CD4-positive, alpha-beta memory T cell (primary cell): ENCODE measurements at regions of chr22 and their contacts with region 1.

Region 1: DNA sequence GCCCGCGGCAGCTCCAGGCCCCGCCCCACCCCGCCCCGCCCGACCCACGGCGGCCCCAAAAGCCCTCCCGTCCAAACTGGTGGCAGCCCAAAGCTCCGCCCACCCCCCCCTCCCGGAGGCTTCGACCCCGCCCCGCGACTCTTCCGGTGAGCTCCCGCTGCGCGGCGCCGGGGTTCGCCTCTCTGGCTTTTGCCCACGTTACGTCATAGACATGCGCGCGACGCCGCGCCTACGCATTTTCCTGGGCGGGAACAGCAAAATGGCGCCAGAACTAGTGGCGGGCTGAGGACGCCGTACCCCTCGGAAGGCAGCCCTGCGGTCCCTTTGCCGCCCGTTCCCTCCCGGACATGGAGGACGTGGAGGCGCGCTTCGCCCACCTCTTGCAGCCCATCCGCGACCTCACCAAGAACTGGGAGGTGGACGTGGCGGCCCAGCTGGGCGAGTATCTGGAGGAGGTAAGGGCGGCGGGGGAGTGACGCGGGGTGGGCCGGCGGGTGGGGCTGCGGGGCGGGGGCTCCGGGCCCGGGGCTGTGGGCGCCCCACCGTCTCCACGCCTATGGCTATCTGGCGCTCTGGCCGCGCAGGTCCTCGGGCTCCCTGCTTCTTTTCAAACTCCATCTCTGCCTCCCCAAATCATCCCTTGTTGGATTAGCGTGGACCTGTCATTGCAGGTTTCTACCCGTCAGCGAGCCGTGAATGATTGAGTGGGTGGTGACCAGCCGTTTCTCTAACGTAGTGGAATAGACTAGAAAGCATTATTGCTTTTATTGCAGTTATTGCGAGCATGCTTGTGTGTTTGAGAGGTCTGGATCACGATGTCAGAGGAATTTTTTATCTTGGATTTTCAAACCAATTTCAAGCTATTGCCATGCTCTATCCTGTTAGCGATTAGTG is at the start of gene NCAPH2:
- DNase-seq: peak; percentile 96 to 97 (median 97)
- H3K4me3 ChIP-seq: peak within 1 kb of the TSS; percentile 84 to 98
- H3K4me3 Mint-ChIP-seq: peak within 1 kb of the TSS; percentile 92 to 98 (median 94)
- H3K27ac ChIP-seq: peak within 1 kb of the TSS; percentile 98
- H3K27ac Mint-ChIP-seq: peak within 1 kb of the TSS; percentile 90 to 99 (median 98)
- H3K4me1 ChIP-seq: peaks cover 28% of the 10 kb centered on the region
- H3K4me1 Mint-ChIP-seq: peaks cover 10 to 26% (median 19%) of the 10 kb centered on the region in 4 donors
- H3K27me3 ChIP-seq: no peaks in the 10 kb centered on the region
- H3K27me3 Mint-ChIP-seq: no peaks in the 10 kb centered on the region
- total RNA-seq, gene NCAPH2: 81.1 to 81.8 TPM

Region 2: DNA sequence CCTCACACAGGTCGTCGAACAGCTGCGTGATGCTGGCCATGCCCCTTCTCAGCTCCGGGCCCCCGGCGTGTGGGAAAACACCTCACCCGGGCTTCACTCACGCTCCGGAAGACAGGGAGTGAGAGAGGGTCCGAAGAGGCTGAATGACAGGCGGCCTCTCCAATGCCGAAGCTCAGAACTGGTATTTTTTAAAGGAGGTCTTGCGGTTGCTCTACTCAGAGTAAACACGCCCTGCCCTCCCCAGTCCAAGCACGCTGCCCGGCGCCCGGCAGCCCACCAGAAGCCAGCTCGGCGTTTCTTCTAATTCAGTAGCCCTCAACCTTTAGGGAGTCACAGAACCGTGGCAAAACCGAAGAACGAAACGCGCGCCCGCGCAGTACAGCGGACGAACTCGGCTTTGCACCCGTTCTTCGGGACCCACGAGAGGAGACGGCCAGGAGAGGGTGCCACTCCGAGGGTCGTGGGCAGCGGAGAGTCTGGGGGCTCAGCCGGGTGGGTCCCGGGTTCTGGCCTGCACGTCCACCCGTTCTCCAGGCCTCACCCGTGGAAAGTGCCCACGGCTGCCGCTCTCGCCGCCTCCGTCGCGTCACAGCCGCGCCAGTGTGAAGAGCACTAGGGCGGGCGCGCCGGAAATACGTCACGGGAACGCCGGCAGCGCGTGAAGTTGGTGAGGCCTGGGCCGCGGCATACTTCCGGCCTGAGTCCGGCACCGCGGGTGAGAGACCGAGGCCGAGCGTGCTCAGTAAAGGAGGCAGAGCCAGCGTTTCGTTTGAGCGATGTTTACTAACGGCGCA is 263.6 kb before region 1 on chr22 and contains the start of gene TUBGCP6:
- CTCF ChIA-PET with region 1: no interaction called
- POLR2A ChIA-PET with region 1: interaction called, 13 read pairs
- intact Hi-C with region 1: no loop called
- DNase-seq: peak; percentile 89 to 93 (median 91)
- H3K4me3 ChIP-seq: peak within 1 kb of the TSS; percentile 37 to 99
- H3K4me3 Mint-ChIP-seq: peak within 1 kb of the TSS; percentile 95 to 100 (median 98)
- H3K27ac ChIP-seq: peak within 1 kb of the TSS; percentile 98
- H3K27ac Mint-ChIP-seq: peak within 1 kb of the TSS; percentile 90 to 100 (median 99)
- H3K4me1 ChIP-seq: peaks cover 69% of the 10 kb centered on the region
- H3K4me1 Mint-ChIP-seq: peaks cover 23 to 64% (median 37%) of the 10 kb centered on the region in 4 donors
- H3K27me3 ChIP-seq: no peaks in the 10 kb centered on the region
- H3K27me3 Mint-ChIP-seq: no peaks in the 10 kb centered on the region
- total RNA-seq, gene TUBGCP6: 132 to 133 TPM

Region 3: DNA sequence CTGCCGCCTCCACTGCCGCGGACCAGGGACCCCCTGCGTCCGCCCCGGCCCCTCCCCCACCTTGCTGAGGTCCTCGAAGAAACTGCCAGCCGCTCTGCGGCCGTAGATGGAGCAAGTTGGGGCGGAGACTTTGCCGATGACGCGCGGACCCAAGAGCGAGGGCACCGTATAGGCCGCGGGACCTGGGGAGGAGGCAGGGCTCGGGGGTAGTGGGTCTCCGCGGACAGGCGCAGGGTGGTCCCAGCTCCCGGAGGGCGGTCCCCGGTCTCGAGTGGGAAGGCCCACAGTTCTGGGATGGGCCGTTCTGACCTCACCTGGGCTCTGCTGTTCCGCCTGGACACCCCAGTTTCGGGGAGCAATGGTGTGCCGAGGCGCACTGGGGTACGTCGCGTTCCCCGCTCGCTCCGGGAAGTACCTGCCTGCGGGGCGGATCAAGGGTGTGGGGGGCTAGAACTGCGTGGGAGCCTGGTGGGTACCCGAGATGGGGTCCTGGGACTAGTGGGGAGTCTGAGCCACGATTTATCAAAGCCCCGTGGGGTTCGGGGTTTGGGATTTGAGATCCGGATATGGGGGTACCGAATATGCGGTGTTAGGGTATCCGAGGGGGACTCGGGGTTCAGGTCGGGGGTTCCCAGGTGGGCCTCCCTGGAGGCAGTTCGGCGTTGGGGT is 22.8 kb after region 1 on chr22:
- CTCF ChIA-PET with region 1: interaction called, 76 read pairs
- POLR2A ChIA-PET with region 1: interaction called, 242 read pairs
- intact Hi-C with region 1: no loop called
- DNase-seq: peak; percentile 72 to 82 (median 77)
- H3K4me3 ChIP-seq: peak overlapping the region; percentile 76 to 94
- H3K4me3 Mint-ChIP-seq: peak overlapping the region; percentile 89 to 95 (median 92)
- H3K27ac ChIP-seq: peak overlapping the region; percentile 96
- H3K27ac Mint-ChIP-seq: peak overlapping the region; percentile 96 to 99 (median 97)
- H3K4me1 ChIP-seq: peaks cover 54% of the 10 kb centered on the region
- H3K4me1 Mint-ChIP-seq: peaks cover 15 to 54% (median 38%) of the 10 kb centered on the region in 4 donors
- H3K27me3 ChIP-seq: no peaks in the 10 kb centered on the region
- H3K27me3 Mint-ChIP-seq: no peaks in the 10 kb centered on the region

Region 4: GRCh38 chr22:50544078-50544745 is 36.0 kb after region 1 on chr22:
- CTCF ChIA-PET with region 1: interaction called, 3 read pairs
- POLR2A ChIA-PET with region 1: interaction called, 26 read pairs
- intact Hi-C with region 1: loop called (anchors 5 kb)
- DNase-seq: peak; percentile 72 to 82 (median 76)
- H3K4me3 ChIP-seq: peak overlapping the region; percentile 24 to 51
- H3K4me3 Mint-ChIP-seq: peak overlapping the region in 7 of 8 donors; percentile 64 to 79 (median 69)
- H3K27ac ChIP-seq: peak overlapping the region; percentile 59
- H3K27ac Mint-ChIP-seq: peak overlapping the region; percentile 42 to 91 (median 85)
- H3K4me1 ChIP-seq: peaks cover 51% of the 10 kb centered on the region
- H3K4me1 Mint-ChIP-seq: peaks cover 26 to 62% (median 42%) of the 10 kb centered on the region in 4 donors
- H3K27me3 ChIP-seq: no peaks in the 10 kb centered on the region
- H3K27me3 Mint-ChIP-seq: no peaks in the 10 kb centered on the region

Region 5: GRCh38 chr22:50582562-50583293 is 74.5 kb after region 1 on chr22 and contains the start of gene CHKB:
- CTCF ChIA-PET with region 1: no interaction called
- POLR2A ChIA-PET with region 1: interaction called, 15 read pairs
- intact Hi-C with region 1: loop called (anchors 1 kb)
- DNase-seq: peak; percentile 98 to 99 (median 98)
- H3K4me3 ChIP-seq: peak within 1 kb of the TSS; percentile 63 to 91
- H3K4me3 Mint-ChIP-seq: peak within 1 kb of the TSS; percentile 90 to 96 (median 93)
- H3K27ac ChIP-seq: peak within 1 kb of the TSS; percentile 97
- H3K27ac Mint-ChIP-seq: peak within 1 kb of the TSS; percentile 91 to 98 (median 96)
- H3K4me1 ChIP-seq: peaks cover 21% of the 10 kb centered on the region
- H3K4me1 Mint-ChIP-seq: peaks cover 8 to 39% (median 16%) of the 10 kb centered on the region in 4 donors
- H3K27me3 ChIP-seq: no peaks in the 10 kb centered on the region
- H3K27me3 Mint-ChIP-seq: no peaks in the 10 kb centered on the region
- total RNA-seq, gene CHKB: 178 to 196 TPM